ENCODE measurements at regions of chr11 and their contacts with region 1.

Region 1: GRCh38 chr11:39120890-39121289 is 2338.6 kb downstream of the LRRC4C start:
- DNase-seq: no peak
- H3K4me3 ChIP-seq: no peak overlapping the region
- H3K27ac ChIP-seq: no peak overlapping the region
- H3K4me1 ChIP-seq: no peaks in the 10 kb centered on the region
- H3K27me3 ChIP-seq: no peaks in the 10 kb centered on the region
- CTCF ChIP-seq: no peak
- POLR2A ChIP-seq: no peak

Region 2: DNA sequence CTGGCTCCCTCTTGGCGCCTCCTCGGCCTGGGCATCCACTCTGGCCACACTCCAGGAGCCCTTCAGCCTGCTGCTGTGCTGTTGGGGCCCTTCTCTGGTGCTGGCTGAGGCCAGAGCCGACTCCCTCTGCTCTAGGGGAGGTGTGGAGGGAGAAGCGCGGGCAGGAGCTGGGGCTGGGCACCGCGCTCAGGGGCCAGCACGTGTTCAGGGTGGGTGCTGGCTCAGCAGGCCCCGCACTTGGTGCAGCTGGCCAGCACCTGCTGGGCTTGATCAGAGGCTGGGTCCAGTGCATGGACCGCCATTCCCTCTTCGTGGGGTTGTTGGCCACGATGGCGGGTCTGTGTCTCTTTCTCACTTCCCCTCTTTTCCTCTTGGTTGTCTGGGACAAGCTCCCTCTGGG is 42.4 kb before region 1 on chr11:
- intact Hi-C with region 1: loop called (anchors 2 kb)
- DNase-seq: no peak
- H3K4me3 ChIP-seq: no peak overlapping the region
- H3K27ac ChIP-seq: no peak overlapping the region
- H3K4me1 ChIP-seq: no peaks in the 10 kb centered on the region
- H3K27me3 ChIP-seq: no peaks in the 10 kb centered on the region
- CTCF ChIP-seq: no peak
- POLR2A ChIP-seq: no peak

Region 3: GRCh38 chr11:39102236-39102635 is 18.7 kb before region 1 on chr11:
- intact Hi-C with region 1: no loop called
- DNase-seq: no peak
- H3K4me3 ChIP-seq: no peak overlapping the region
- H3K27ac ChIP-seq: no peak overlapping the region
- H3K4me1 ChIP-seq: no peaks in the 10 kb centered on the region
- H3K27me3 ChIP-seq: no peaks in the 10 kb centered on the region
- CTCF ChIP-seq: no peak
- POLR2A ChIP-seq: no peak

Measured in breast epithelium (tissue), 4 donors.